HEK293T (cell line): ENCODE measurements at regions of chr19 and their contacts with region 1.

Region 1: GRCh38 chr19:42184401-42184861 is 33.0 kb downstream of the DEDD2 start:
- DNase-seq: peak; percentile 82

Region 2: GRCh38 chr19:42132851-42133528 is 51.4 kb before region 1 on chr19:
- CTCF ChIA-PET with region 1: interaction called, 17 read pairs
- POLR2A ChIA-PET with region 1: no interaction called
- DNase-seq: peak; percentile 91

Region 3: DNA sequence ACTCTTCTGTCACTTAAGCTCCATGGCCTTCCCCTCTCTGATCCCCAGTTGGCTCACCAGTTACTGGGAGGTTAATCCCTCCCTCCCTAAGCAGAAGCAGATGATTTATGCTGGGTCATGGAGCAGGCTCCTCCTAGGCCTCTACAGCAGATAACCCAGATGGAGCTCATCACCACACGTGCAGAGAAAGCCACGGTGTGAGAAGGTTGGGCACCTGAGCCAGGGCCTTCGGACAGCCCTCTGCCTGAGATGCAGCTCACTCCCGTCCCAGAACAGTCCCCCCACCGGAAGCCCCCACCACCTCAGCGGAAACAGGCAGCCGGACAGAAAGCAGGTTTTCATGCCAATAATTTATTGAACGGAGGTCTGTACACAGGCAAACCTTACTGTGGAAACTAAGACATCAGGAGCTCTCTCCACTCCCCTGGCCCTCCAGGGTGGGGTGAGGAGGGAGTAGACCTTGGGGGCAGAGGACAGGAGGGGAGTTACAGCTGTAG is 45.5 kb after region 1 on chr19:
- CTCF ChIA-PET with region 1: no interaction called
- POLR2A ChIA-PET with region 1: no interaction called
- DNase-seq: no peak

Region 4: DNA sequence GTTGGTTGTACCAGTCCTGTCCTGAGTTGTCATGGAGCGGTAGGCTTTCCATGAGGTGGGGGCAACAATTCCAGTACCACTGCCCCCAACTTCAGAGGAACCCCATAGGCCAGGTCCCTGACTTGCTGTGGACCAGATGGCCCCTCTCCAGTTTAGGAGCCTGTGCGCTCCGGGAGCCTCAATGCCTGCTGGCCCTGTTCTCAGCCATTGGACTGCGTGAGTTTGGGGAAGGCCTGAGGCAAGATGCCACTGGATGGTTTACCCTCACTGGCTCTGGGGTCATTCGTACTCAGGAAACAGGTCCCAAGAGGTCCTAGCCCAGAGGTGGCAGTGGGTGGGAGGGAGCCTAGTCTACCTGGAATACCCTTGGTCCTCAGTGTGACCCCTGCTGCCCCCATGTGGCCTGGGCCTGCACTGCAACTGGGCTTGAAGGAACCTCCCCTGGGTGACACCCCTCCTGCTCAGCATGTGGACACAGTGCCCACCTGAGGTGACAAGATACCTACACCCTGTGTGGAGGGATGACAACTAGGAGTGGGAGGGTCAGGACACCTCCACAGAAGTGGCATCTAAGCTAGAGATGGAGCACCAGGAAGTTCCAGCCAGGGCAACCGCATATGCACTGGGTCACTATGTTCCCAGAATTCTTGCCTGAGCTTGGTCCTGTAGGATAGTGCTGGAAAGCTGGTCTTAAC is 111.5 kb after region 1 on chr19:
- CTCF ChIA-PET with region 1: no interaction called
- POLR2A ChIA-PET with region 1: no interaction called
- DNase-seq: peak; percentile 77